ENCODE measurements at regions of chr2 and their contacts with region 1.

Region 1: DNA sequence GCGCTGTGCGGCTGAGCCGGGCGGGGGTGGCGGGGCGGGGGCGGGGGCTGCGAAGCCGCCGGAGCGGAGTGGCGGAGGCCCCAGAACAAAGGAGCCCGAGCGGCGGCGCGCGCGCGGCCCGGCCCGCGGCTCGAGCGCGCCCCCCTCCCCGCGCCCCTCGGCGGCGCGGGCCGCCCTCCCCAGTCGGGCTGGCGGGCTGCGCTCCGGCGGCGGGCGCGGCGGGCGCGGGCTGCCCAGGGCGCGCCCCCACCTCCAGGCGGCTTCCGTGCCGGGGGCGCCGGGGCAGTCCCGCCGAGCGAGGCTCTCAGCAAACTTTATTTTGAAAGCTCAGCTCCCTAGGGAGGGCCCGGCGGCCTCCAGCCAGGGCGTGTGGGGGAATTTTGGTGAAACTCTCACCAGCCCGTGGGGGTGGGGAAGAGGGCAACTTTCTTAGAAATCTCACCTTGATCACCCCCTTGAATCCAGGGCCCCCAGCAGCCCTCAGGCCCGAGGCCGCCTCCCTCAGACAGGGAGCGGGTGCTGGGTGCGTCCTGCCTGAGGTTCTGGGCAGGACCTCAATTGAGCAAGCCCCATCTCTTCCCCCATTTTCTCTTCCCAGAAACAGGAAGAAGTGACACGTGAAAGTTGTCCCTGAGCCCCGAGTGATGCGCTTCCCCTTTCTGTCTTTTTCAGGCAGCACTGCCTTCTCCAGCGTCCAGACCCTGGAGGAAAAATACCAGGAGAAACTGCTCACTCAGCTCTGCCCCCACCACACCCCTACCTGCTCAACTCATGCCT is 786 bp downstream of the TET3 start:
- DNase-seq: no peak
- ATAC-seq: peak; percentile 16
- H3K4me3 ChIP-seq: peak overlapping the region; percentile 96
- H3K27ac ChIP-seq: peak overlapping the region; percentile 89
- H3K4me1 ChIP-seq: peaks cover 12% of the 10 kb centered on the region
- H3K27me3 ChIP-seq: no peaks in the 10 kb centered on the region
- CTCF ChIP-seq: no peak
- EP300 ChIP-seq: peak; percentile 21 to 47; a peak in 1 of 4 replicates
- POLR2A ChIP-seq: no peak; the same call in 1 of the 2 replicates
- RAD21 ChIP-seq: no peak

Region 2: DNA sequence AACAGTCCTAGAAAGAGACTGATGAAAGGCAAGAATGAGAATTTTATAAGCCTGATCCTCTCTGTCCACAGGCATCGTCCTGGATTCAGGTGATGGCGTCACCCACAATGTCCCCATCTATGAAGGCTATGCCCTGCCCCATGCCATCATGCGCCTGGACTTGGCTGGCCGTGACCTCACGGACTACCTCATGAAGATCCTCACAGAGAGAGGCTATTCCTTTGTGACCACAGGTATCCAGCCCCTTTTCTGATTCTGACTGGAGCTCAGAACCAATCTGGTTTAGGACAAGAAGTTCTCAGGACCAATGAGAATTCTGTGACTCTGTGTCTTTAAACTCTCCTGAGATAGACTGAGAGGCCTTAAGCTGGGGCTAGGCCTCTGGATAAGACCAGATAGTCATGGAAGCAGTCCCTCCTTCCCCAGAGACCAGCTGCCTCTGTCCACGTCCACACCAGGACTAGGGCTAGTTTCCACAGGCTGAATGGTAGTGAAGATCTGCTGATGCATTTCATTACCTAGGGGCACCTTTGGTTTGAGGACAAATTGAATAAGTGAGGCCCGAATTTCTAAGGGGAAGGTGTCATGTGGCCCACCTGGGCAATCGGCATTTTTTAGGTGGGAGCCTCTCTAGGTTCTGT is 72.0 kb before region 1 on chr2:
- CTCF ChIA-PET with region 1: interaction called, 78 read pairs
- POLR2A ChIA-PET with region 1: interaction called, 3 read pairs
- RAD21 ChIA-PET with region 1: interaction called, 52 read pairs
- SMC1A ChIA-PET with region 1: interaction called, 21 read pairs
- in situ Hi-C with region 1: no loop called
- intact Hi-C with region 1: no loop called
- DNase-seq: no peak
- ATAC-seq: no peak
- H3K4me3 ChIP-seq: no peak overlapping the region
- H3K27ac ChIP-seq: no peak overlapping the region
- H3K4me1 ChIP-seq: no peaks in the 10 kb centered on the region
- H3K27me3 ChIP-seq: no peaks in the 10 kb centered on the region
- CTCF ChIP-seq: no peak
- EP300 ChIP-seq: no peak
- POLR2A ChIP-seq: no peak
- RAD21 ChIP-seq: no peak

Region 3: DNA sequence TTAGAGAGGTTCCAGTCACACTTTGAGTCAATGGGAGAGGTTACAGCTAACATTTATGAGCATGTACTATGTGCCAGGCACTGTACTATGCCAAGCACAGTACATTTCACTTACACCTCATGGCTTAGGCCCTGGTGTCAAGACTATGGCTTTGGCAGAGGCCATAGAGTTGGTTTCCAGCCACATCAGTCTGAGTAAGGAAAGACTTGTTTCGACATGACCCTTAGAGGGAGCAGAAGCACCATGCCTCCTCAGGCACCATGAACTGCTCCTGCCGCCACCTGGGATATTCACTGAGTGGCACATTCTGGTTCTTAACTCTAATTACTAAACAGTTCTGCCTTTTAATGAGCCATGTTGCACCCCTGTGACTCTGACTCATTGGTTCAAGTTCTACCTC is 46.1 kb before region 1 on chr2:
- CTCF ChIA-PET with region 1: interaction called, 10 read pairs
- POLR2A ChIA-PET with region 1: interaction called, 4 read pairs
- RAD21 ChIA-PET with region 1: interaction called, 6 read pairs
- SMC1A ChIA-PET with region 1: interaction called, 17 read pairs
- in situ Hi-C with region 1: no loop called
- intact Hi-C with region 1: no loop called
- DNase-seq: no peak
- ATAC-seq: peak; percentile 53
- H3K4me3 ChIP-seq: no peak overlapping the region
- H3K27ac ChIP-seq: no peak overlapping the region
- H3K4me1 ChIP-seq: peaks cover 8% of the 10 kb centered on the region; the same call in 1 of the 2 replicates
- H3K27me3 ChIP-seq: no peaks in the 10 kb centered on the region
- CTCF ChIP-seq: 0 out of 6 replicates have a peak, but pooled peaks of 1 of the 3 experiments have one; percentile 14
- EP300 ChIP-seq: no peak
- POLR2A ChIP-seq: no peak
- RAD21 ChIP-seq: peak; percentile 24; the same call in 1 of the 2 replicates

Region 4: GRCh38 chr2:73963385-73964120 is 21.9 kb before region 1 on chr2:
- CTCF ChIA-PET with region 1: interaction called, 11 read pairs
- POLR2A ChIA-PET with region 1: interaction called, 19 read pairs
- RAD21 ChIA-PET with region 1: interaction called, 10 read pairs
- SMC1A ChIA-PET with region 1: interaction called, 31 read pairs
- in situ Hi-C with region 1: no loop called
- intact Hi-C with region 1: no loop called
- DNase-seq: peak; percentile 80
- ATAC-seq: peak; percentile 96
- H3K4me3 ChIP-seq: peak overlapping the region; percentile 43; the same call in 1 of the 2 replicates
- H3K27ac ChIP-seq: peak overlapping the region; percentile 88
- H3K4me1 ChIP-seq: peaks cover 20% of the 10 kb centered on the region
- H3K27me3 ChIP-seq: no peaks in the 10 kb centered on the region
- CTCF ChIP-seq: no peak
- EP300 ChIP-seq: peak in 1 of 2 experiments; percentile 18; a peak in 1 of 4 replicates
- POLR2A ChIP-seq: peak; percentile 33; the same call in 1 of the 2 replicates
- RAD21 ChIP-seq: no peak

Region 5: GRCh38 chr2:74020702-74021406 is 35.4 kb after region 1 on chr2:
- CTCF ChIA-PET with region 1: interaction called, 12 read pairs
- POLR2A ChIA-PET with region 1: interaction called, 13 read pairs
- RAD21 ChIA-PET with region 1: interaction called, 12 read pairs
- SMC1A ChIA-PET with region 1: interaction called, 9 read pairs
- in situ Hi-C with region 1: no loop called
- intact Hi-C with region 1: no loop called
- DNase-seq: no peak
- ATAC-seq: peak; percentile 67
- H3K4me3 ChIP-seq: no peak overlapping the region
- H3K27ac ChIP-seq: peak overlapping the region; percentile 76
- H3K4me1 ChIP-seq: peaks cover 32% of the 10 kb centered on the region
- H3K27me3 ChIP-seq: no peaks in the 10 kb centered on the region
- CTCF ChIP-seq: 0 out of 6 replicates have a peak, but pooled peaks of 1 of the 3 experiments have one; percentile 0
- EP300 ChIP-seq: peak in 1 of 2 experiments; percentile 32; a peak in 1 of 4 replicates
- POLR2A ChIP-seq: no peak
- RAD21 ChIP-seq: no peak

Region 6: DNA sequence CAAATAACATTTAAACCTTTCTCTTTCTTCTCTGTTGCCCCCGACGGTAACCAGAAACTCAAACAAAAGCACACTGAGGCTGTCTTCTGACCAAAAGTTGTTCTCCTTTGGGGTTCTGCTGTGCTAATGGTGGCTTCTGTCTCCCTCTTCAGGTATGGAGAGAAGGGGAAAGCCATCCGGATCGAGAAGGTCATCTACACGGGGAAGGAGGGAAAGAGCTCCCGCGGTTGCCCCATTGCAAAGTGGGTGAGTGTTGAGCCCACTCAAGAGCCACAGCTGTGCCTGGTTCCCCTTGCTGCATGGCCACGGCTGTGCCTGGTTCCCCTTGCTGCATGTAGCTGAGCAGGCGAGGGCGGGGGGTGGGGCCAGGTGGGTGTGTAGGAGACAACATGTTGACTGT is 94.8 kb after region 1 on chr2:
- CTCF ChIA-PET with region 1: interaction called, 8 read pairs
- POLR2A ChIA-PET with region 1: interaction called, 5 read pairs
- RAD21 ChIA-PET with region 1: interaction called, 15 read pairs
- SMC1A ChIA-PET with region 1: interaction called, 10 read pairs
- in situ Hi-C with region 1: no loop called
- intact Hi-C with region 1: no loop called
- DNase-seq: no peak
- ATAC-seq: peak; percentile 39
- H3K4me3 ChIP-seq: no peak overlapping the region
- H3K27ac ChIP-seq: peak overlapping the region; percentile 57
- H3K4me1 ChIP-seq: peaks cover 17% of the 10 kb centered on the region
- H3K27me3 ChIP-seq: no peaks in the 10 kb centered on the region
- CTCF ChIP-seq: peak; percentile 23 to 58 (median 28); a peak in 4 of 6 replicates
- EP300 ChIP-seq: peak in 1 of 2 experiments; percentile 7; a peak in 1 of 4 replicates
- POLR2A ChIP-seq: peak; percentile 30; the same call in 1 of the 2 replicates
- RAD21 ChIP-seq: peak; percentile 78